ENCODE measurements at regions of chr1 and their contacts with region 1.

Region 1: DNA sequence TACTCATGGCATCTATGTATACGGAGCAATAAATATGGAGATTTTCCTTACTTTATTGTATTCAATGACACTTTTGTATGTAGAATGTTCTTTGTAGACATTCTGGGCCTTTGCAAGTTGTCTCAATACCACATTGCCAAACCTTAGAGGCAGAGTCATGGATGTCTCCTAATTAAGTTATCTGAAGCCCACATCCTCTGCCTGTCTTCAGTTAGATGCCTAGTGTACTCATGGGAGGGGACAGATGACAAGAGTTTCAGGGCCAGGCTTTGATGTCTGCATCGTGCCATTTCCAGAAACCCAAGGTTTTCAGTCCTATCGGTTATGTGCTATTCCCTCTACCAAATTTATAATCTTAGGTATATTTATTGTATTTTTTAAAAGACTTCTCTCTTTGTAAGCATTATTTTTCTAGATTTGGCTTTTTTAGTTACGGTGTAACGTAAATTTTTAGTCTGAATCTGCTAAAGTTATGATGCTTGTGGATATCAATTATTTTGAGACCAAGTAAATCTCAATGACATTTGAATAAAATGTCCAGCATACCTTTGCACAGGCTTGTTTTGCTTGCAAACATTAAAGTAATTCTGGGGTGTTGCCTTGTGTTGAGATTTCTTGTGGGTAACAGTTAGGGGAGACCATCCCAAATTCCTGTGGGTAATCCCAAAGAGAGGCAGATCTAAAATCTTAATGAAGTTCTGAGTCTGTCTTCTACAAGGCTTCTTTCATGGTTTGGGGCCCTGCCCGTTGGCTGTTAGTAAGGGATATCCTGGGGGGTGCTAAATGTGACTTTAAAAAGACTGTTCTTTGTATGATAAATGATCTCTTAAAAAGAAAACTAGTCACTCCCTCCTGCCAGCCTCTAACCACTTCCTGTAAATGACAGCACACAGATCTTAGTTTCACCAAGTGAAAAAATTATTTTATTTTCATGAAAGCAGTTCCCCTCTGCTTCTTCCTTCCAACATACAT is 8.0 kb upstream of the MACF1 start:
- DNase-seq: no peak

Region 2: DNA sequence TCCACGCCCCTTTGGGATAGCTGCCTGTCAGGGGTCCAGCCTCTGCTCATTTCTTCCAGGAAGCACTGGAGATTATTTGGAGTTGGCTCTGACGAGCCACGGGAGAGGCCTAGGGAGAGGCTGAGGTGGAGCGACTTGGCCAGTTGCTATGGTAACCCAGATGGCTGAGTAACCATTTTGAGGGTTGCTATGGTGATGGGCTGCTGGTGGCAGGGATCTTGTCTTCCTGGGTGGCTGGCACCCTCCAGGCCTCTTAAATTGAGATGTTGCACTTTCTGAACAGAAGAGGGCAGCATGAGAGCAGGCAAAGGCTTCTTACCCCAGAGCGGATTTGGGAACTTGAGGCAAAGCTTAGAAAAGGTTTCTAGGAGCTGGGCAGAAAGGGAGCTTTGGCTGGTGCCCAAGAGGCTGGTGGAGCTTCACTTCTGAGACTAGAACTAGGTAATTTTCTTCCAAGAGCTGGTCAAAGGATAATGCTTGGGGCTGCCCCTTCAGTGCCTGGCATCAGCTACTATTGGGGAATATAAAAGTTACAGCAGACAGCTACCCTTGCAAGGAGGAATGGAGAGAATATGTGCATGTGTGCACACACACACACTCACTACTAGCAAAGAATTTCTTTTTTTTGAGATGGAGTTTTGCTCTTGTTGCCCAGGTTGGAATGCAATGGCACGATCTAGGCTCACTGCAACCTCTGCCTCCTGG is 97.8 kb before region 1 on chr1:
- CTCF ChIA-PET with region 1: interaction called, 30 read pairs
- POLR2A ChIA-PET with region 1: no interaction called
- DNase-seq: peak; percentile 82

Region 3: DNA sequence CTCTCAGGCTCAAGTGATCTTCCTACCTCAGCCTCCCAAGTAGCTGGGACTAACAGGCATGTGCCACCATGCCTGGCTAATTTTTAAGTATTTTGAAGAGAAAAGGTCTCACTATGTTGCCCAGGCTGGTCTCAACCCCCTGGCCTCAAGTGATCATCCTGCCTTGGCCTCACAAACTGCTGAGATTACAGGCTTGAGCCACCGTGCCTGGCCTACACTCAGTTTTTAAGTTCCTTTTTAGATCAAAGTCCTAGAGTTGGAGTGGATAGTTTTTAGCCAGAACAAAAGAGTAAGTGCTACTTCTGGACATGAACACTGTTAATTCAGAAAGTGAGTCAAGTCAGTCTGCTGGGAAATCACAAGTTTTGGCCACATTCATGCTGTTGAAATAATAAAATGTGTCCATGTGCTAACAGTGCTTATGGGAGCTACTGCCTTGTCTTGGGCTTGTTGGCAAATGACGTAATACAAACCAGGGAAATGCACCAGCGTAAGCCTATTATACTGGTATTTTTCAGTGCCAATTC is 86.1 kb before region 1 on chr1:
- CTCF ChIA-PET with region 1: interaction called, 17 read pairs
- POLR2A ChIA-PET with region 1: interaction called, 14 read pairs
- DNase-seq: no peak

Region 4: DNA sequence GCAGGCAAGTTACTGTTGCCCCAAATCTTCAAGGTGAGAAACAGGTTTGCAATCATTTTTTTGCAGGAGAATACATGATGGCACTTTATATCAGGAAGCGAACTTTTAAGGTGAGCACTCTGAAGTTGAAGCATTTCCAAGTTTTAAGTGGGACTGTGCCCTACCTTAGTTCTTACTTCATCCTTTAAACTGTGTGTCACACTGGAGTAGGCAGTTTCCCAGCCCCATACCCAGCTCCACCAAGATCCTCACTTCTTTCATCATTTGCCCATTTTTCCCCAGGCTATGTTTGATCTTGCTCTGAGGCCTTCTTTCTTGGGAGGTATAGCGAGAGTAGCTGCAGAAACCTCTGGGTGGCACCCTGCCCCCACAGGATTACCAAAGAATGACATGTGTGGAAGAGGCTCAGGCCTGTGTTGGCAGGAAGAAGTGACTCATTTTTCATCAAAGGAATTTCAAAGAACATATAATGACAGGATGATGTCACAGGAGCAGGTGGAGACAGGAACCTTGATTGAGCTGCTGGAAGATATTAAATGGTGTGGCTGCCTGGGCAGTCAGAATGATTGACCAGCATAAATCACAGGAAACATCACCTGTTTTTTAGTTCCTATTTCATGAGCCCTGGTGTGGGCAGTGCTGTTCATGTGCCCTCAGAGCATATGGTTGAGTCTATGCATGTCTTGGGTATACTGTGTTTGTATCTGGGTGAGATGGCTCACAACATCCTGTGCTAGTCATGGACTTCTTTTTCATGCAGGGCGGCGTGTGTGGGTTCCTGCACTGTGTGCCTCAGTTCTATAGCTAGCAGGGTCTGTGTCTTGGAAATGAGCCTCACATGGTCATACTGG is 12.8 kb before region 1 on chr1:
- CTCF ChIA-PET with region 1: interaction called, 15 read pairs
- POLR2A ChIA-PET with region 1: no interaction called
- DNase-seq: peak; percentile 63

Region 5: DNA sequence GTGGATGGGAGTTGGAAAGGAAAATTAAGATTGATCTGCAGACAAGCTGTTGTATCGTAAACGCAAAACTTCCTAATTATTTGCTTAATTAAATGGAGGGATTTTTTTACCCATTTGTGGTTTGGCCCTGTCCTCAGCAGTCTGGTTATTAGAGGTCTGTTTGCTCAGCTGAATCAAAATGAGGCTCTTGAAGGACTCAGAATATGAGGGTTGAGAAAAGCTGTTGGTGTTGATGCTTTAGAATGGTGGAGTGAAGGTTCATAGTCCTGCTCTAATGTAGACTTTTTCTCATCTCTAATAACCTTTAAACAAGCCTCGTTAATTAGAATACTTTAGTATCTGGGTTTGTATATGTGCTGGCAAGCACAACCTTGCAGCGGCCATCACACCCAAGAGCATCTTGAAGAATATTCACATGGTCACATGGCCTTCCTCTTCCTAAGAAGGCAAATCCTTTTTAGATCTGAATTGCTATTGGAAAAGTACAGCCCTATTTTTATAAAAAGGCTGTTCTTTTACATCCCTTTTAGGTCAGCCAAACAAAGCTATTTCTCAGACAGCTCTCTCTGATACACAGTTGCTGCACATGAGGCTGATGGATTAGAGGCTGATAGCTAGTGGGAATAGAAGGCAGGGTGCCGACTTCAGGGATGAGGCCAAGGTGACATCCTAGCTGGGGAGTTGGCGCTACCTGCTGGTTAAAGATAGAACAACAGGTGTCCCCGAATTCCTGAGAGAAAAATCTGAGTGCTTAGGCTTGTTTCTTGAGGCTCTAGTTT is 61.8 kb after region 1 on chr1:
- CTCF ChIA-PET with region 1: interaction called, 51 read pairs
- POLR2A ChIA-PET with region 1: no interaction called
- DNase-seq: peak; percentile 82

Measured in HEK293T (cell line).